ENCODE measurements at regions of chr17 and their contacts with region 1.

Region 1: DNA sequence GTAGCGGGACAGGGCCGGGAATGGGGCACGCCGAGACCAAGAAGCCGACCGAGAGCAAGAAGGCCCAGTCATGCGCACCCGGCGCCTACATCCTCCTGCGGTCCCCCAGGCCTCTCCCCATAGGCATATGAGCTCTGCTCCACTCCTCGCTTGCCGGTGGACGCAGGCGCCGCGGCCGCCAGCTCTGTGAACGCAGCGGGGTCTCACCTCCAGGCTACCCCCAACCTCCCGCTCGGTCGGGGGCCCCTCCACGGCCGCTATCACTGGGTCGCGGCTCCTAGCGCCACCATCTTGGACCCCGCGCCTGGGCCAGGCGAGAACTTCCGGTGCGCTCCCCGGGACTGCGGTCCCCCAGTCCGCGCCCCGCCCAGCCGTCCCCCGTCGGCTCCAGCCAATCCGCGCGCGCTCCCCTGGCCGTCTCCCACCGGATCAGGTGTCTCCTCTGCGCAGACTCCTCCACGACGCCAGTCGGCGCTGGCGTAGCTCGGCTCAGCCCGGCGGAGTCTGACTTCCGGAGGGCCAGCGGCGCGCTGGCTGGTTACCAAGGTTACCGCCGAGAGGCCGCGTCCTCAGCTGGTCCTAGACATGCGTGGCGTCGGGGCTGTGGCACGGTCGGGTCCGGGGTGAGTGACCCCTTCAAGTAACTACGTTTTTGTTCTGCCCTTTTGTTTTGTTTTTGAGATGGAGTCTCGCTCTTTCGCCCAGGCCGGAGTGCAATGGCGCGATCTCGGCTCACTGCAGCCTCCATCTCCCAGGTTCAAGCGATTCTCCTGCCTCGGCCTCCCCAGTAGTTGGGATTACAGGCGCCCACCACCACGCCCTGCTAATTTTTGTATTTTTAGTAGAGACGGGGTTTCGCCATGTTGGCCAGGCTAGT is at the start of gene ZNF594:
- DNase-seq: peak; percentile 63
- H3K4me3 ChIP-seq: peak within 1 kb of the TSS; percentile 91
- CTCF ChIP-seq: peak; percentile 94

Region 2: DNA sequence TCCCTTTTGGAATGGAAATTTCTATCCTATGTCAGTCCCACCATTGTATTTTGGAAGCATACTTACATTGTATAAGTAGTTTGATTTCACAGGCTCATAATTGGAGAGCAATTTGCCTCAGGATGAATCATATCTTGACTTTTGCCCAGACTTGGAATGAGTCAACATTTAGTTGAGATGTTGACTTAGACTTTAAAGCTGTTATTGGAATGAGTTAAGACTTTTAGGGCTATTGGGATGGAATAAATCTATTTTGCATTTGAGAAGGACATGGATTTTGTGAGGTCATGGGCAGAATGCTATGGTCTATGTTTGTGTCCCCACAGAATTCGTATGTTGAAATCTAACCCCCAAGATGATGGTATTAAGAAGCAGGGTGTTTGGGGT is 12.1 kb after region 1 on chr17:
- CTCF ChIA-PET with region 1: interaction called, 24 read pairs
- POLR2A ChIA-PET with region 1: no interaction called
- DNase-seq: no peak
- H3K4me3 ChIP-seq: no peak overlapping the region
- CTCF ChIP-seq: no peak